Activated CD4-positive, alpha-beta T cell treated with anti-CD3 and anti-CD28 coated beads, Interleukin-2, amount 10 ng/mL, durations not matched to agents 7 days and 5 days (primary cell): ENCODE measurements at regions of chr20 and their contacts with region 1.

Region 1: DNA sequence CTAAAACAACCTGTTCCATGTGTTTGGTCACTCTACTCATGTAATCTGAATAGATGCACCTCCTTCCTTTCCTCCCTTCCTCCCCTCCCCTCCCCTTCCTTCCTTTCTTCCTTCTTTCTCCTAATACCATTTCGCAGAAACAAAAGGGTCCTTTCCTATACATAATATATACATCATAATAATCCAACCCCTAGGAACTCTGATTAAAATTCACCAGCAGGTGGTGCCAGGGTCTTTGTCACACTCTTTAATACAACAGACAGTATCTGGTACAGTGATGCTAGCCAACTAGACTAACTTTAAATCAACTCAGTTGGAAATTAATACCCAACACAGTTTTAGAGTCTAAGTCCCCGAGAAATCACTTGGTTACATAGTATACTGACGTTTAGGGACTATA is 181.2 kb upstream of the SHLD1 start:
- DNase-seq: peak; percentile 72
- H3K4me3 Mint-ChIP-seq: no peak overlapping the region
- H3K27ac Mint-ChIP-seq: peak overlapping the region; percentile 72
- H3K4me1 Mint-ChIP-seq: peaks cover 35% of the 10 kb centered on the region
- H3K27me3 Mint-ChIP-seq: no peaks in the 10 kb centered on the region

Region 2: DNA sequence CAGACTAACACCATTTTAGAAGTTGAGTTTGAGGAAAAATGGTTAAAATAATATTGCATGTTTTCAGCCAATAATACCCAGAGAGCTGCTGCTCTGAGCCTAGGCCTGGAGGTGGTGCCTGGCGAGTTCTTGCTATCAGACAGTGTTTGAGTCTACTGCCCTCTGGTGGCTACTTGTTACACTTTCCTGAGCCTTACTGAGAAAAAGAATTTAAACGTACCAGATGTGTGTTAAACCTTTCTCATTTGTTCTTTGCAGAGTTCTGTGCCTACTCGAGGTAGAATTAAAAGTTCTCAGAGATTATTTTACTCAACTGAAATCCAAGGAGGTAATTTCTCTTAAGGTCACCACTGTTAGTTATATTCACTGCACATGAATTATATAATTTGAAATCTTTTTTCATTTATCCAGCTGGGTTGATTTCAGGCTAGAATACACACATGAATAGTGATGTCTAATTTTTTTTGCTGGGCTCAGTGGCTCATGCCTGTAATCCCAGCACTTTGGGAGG is 219.4 kb after region 1 on chr20:
- CTCF ChIA-PET with region 1: interaction called, 12 read pairs
- POLR2A ChIA-PET with region 1: interaction called, 3 read pairs
- DNase-seq: peak; percentile 92
- H3K4me3 Mint-ChIP-seq: no peak overlapping the region
- H3K27ac Mint-ChIP-seq: peak overlapping the region; percentile 62
- H3K4me1 Mint-ChIP-seq: peaks cover 6% of the 10 kb centered on the region
- H3K27me3 Mint-ChIP-seq: no peaks in the 10 kb centered on the region